Activated T-helper 2 cell treated with anti-CD3 and anti-CD28 coated beads, Interferon-gamma antibody, Interleukin-2, Interleukin-4, amounts not matched to agents 10 μg/mL and 5 μg/mL and 100 μg/mL, durations not matched to agents 14 hours and 24 hours and 36 hours (primary cell): ENCODE measurements at regions of chr17 and their contacts with region 1.

Region 1: GRCh38 chr17:18896146-18896545 is 38.2 kb downstream of the PRPSAP2 start:
- DNase-seq: no peak
- H3K4me3 Mint-ChIP-seq: no peak overlapping the region
- H3K27ac Mint-ChIP-seq: no peak overlapping the region
- H3K4me1 Mint-ChIP-seq: peaks cover 24% of the 10 kb centered on the region
- H3K27me3 Mint-ChIP-seq: no peaks in the 10 kb centered on the region

Region 2: DNA sequence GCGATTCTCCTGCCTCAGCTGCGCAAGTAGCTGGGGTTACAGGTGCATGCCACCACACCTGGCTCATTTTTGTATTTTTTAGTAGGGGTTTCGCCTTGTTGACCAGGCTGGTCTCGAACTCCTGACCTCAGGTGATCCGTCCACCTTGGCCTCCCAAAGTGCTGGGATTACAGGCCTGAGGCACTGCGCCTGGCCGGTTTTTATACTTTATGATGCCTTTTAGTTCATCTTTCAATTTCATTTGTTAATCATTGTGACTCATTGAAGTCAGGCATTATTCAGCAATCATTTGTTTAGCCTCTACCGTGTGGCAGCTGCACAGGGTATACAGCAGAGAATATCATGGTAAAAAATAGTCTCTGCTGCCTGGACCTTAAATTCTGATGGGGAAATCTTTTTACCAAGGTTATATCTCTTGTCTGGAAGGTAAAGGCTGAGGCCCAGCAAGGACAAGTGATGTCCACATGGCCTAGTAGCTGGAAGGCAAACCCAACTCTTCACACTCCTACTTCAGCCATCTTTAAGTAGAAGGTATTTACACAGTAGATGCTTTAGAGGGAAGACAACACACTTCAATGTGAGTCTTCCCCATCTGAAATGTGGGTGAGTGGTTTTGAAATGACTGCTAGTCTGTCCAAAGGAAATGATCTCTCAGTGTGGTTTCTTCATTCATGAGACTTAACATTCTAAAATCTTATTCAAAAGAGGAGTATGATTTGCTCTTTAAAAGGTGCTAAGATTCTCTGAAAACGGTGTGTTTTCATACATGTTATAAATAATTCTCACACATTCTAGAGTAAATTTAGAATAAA is 35.8 kb before region 1 on chr17:
- intact Hi-C with region 1: loop called (anchors 1 kb)
- DNase-seq: no peak
- H3K4me3 Mint-ChIP-seq: peak overlapping the region; percentile 68
- H3K27ac Mint-ChIP-seq: peak overlapping the region; percentile 92
- H3K4me1 Mint-ChIP-seq: peaks cover 36% of the 10 kb centered on the region
- H3K27me3 Mint-ChIP-seq: no peaks in the 10 kb centered on the region

Region 3: GRCh38 chr17:18877104-18877503 is 19.0 kb before region 1 on chr17:
- intact Hi-C with region 1: no loop called
- DNase-seq: no peak
- H3K4me3 Mint-ChIP-seq: no peak overlapping the region
- H3K27ac Mint-ChIP-seq: no peak overlapping the region
- H3K4me1 Mint-ChIP-seq: no peaks in the 10 kb centered on the region
- H3K27me3 Mint-ChIP-seq: no peaks in the 10 kb centered on the region

Region 4: GRCh38 chr17:18933102-18934058 is 37.2 kb after region 1 on chr17:
- intact Hi-C with region 1: no loop called
- DNase-seq: no peak
- H3K4me3 Mint-ChIP-seq: no peak overlapping the region
- H3K27ac Mint-ChIP-seq: peak overlapping the region; percentile 38
- H3K4me1 Mint-ChIP-seq: peaks cover 20% of the 10 kb centered on the region
- H3K27me3 Mint-ChIP-seq: peaks cover 4% of the 10 kb centered on the region